Activated CD4-positive, alpha-beta T cell treated with anti-CD3 and anti-CD28 coated beads, Interleukin-2, amount 10 ng/mL, durations not matched to agents 24 days and 14 days (primary cell): ENCODE measurements at regions of chr22 and their contacts with region 1.

Region 1: DNA sequence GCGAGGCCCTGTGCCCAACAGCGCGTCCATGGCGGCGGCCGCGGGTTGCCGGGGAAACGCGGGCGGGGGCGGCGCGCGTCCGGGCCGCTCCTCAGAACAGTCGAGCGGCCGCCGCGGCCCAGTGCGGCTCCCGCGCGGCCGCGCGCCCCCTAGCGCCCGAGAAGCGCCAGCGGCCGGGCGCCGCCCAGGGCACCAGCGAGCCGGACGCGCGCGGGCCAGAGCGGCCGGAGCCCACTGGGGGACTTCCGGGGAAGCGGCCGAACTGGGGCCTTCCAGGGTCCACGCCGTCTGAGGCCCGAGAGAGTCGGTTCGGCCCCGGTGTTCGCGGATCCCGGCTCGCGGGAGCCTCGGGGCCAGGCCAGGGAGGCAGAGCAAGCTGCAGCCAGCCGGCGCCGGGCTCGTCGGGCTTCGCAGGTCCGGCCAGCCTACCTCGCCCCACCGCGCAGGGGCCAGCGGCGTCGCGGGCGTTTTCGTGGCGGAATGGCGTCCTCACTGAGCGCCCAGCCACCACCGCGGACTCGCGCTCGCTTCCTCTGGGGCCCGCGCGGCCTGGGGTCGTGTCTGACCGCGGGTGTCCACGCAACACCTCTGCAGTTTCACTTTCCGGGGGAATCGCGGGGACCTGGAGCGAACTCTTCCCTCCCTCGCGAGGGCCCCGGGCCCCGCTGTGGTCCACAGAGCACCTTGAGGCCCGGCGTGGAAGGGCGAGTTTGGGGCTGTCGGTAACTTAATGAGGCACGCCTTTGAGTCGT is at the start of gene DENND6B:
- DNase-seq: peak; percentile 93
- H3K4me3 Mint-ChIP-seq: peak within 1 kb of the TSS; percentile 87
- H3K27ac Mint-ChIP-seq: peak within 1 kb of the TSS; percentile 87
- H3K4me1 Mint-ChIP-seq: peaks cover 13% of the 10 kb centered on the region
- H3K27me3 Mint-ChIP-seq: peaks cover 18% of the 10 kb centered on the region
- total RNA-seq, gene DENND6B: 1.4 and 2.2 TPM in 2 replicates

Region 2: GRCh38 chr22:49992921-49993648 is 334.1 kb before region 1 on chr22:
- intact Hi-C with region 1: no loop called
- DNase-seq: peak; percentile 90
- H3K4me3 Mint-ChIP-seq: no peak overlapping the region
- H3K27ac Mint-ChIP-seq: no peak overlapping the region
- H3K4me1 Mint-ChIP-seq: peaks cover 4% of the 10 kb centered on the region
- H3K27me3 Mint-ChIP-seq: peaks cover 8% of the 10 kb centered on the region

Region 3: DNA sequence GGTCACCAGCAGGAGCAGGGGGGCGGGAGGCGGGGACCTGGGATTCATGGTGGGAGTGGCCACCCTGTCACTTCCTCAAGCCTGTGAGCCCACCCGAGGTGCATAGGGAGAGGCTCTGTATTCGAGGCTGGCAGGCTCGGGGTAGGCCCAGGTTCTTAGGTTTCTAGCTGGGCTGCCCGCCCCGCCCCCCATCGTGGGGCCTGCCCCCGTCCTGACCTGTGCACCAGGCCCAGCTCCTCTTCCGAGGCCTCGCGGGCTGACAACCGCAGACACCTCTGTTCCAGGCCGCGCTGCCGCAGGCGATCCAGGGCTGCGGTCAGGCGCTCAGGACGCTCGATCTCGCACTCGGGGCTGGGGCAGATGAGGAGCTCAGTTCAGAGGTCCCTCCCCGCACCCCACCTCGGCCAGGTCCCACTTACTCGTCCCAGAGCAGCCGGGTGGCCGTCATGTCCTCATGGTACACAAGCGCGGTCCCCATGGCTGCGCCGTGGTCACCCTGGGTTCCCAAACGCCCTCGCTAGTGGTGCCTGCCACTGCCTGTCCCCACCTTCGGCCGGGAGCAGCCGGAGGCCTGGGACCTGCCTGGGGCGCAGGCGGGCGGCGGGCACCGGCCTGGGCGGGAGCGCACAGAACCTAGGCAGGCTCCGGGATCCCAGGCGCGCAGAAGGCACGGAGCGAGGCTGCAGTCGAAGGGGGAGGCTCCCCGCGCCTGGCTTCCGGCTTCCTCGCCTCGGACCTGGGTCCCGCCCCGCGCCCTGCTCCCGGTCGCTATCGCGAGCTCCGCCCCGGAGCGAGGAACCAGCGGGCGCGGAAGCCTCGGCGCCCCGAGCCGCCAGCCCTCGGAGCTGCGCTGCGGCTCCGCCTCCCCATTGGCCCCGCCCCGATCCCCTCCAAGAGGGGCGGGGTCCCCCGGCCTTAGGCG is 76.3 kb before region 1 on chr22 and contains the start of gene HDAC10:
- intact Hi-C with region 1: loop called (anchors 5 kb)
- DNase-seq: peak; percentile 96
- H3K4me3 Mint-ChIP-seq: peak within 1 kb of the TSS; percentile 84
- H3K27ac Mint-ChIP-seq: peak within 1 kb of the TSS; percentile 80
- H3K4me1 Mint-ChIP-seq: peaks cover 3% of the 10 kb centered on the region
- H3K27me3 Mint-ChIP-seq: no peaks in the 10 kb centered on the region
- total RNA-seq, gene HDAC10: 62.2 and 64.6 TPM in 2 replicates

Region 4: DNA sequence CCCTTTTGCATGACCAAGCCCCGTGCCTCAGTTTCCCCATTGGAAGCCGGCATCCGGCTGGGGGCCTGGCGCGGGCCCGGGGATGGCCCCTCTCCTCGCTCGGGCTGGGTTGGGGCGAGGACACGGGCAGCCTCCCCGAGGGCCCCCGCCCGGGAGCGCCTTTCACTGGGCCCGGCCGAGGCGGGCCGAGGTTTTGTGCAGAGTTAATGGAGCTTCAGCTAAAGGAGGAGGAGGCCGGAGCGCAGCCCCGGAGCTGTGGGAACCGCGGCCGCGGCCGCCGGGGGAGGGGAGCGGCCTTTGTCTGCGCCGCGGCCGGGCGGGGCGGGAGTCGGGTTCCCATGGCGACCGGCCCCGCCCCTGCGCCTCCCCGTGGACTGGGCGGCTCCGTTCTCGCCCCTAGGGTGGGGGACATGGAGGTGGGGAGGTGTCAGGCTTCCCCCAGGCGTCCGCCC is 55.6 kb before region 1 on chr22:
- intact Hi-C with region 1: loop called (anchors 2 kb)
- DNase-seq: peak; percentile 90
- H3K4me3 Mint-ChIP-seq: no peak overlapping the region
- H3K27ac Mint-ChIP-seq: no peak overlapping the region
- H3K4me1 Mint-ChIP-seq: peaks cover 13% of the 10 kb centered on the region
- H3K27me3 Mint-ChIP-seq: peaks cover 6% of the 10 kb centered on the region

Region 5: DNA sequence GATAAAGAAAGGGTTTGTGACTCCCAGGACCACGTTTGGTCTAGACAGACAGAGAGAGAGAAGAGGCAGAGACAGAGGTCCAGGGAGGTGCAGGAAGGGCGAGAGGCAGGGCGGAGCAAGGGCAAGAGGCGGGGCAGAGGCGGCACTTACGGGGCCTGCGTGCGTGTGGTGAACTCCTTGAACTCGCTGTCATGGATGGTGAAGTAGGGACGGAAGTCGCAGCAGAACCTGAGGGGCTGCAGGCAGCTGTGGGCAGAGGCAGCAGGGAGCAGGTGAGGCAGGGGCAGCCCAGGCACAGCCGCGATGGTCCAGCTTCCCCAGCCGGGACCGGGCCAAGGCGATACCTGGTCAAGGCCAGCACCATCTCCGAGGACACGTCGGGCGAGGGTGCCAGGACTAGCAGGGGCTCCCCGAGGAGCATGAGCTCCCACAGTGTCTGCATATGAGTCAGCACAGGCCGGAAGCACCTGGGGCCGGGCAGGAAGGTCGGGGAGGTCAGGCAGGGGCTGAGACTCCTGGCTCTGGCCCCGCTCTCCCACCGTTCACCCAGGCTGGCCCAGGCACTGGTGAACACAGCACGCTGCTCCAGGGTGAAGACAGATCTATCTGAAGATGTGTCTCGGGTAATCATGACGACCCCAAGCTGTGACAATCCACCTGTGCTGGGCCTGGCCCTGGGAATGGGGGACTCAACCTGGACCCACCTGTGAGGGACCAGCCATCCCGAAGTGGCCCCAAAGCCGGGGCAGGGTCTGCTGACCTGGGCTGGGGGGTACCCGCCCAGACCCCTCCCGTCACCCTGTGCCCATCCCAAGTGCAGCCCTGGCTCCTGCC is 12.5 kb before region 1 on chr22:
- intact Hi-C with region 1: loop called (anchors 1 kb)
- DNase-seq: peak; percentile 93
- H3K4me3 Mint-ChIP-seq: peak overlapping the region; percentile 88
- H3K27ac Mint-ChIP-seq: peak overlapping the region; percentile 78
- H3K4me1 Mint-ChIP-seq: peaks cover 8% of the 10 kb centered on the region
- H3K27me3 Mint-ChIP-seq: no peaks in the 10 kb centered on the region